ENCODE measurements at regions of chr10 and their contacts with region 1.

Region 1: GRCh38 chr10:79195091-79195923 is 126.5 kb downstream of the ZMIZ1 start:
- DNase-seq: peak; percentile 71
- ATAC-seq: peak; percentile 85
- H3K4me3 ChIP-seq: no peak overlapping the region
- H3K27ac ChIP-seq: peak overlapping the region; percentile 58
- H3K4me1 ChIP-seq: peaks cover 36% of the 10 kb centered on the region
- H3K27me3 ChIP-seq: no peaks in the 10 kb centered on the region
- CTCF ChIP-seq: peak; percentile 98
- EP300 ChIP-seq: no peak
- POLR2A ChIP-seq: no peak
- RAD21 ChIP-seq: peak; percentile 97

Region 2: DNA sequence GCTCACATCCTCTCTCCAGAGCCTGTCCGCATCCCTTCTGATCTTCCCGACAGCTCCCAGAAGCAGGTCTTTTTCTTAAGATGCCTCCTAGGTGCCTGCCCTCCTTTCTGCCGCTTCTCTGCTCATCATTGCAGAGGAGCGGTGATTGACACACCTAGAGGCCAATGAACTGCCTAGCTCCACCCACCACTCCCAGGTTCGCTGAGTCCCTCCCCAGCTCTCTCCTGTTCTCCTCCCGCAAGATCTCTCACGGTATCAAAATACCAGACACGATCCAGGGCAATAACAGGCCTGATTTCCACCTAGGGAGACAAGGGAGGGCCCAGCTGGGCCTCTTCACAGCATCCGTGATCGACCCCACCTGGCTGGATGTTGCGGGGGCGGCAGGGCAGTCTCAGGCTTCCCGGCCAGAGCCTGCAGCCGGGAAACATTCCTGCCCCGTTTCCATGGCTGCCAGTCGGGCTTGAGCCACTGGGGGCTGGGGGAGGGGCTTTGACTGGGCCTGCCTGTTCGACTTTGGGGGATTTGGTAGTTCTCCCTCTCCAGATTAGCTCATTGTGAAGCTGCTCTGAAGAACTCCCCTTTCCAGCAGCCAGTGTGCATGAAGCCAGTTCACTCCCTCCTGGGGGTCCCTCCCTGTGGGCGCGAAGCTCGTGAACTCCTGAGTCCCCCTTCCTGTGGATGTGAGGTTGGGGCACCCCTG is 788.1 kb before region 1 on chr10:
- CTCF ChIA-PET with region 1: no interaction called
- POLR2A ChIA-PET with region 1: no interaction called
- in situ Hi-C with region 1: no loop called
- intact Hi-C with region 1: no loop called
- DNase-seq: peak; percentile 20
- ATAC-seq: peak; percentile 77
- H3K4me3 ChIP-seq: peak overlapping the region in 1 of 3 experiments; percentile 38; a peak in 1 of 6 replicates
- H3K27ac ChIP-seq: no peak overlapping the region
- H3K4me1 ChIP-seq: no peaks in the 10 kb centered on the region; the same call in 1 of the 2 replicates
- H3K27me3 ChIP-seq: peaks cover 4 to 63% of the 10 kb centered on the region in 2 experiments; a peak in 4 of 5 replicates
- CTCF ChIP-seq: no peak
- EP300 ChIP-seq: no peak
- POLR2A ChIP-seq: no peak
- RAD21 ChIP-seq: no peak

Region 3: GRCh38 chr10:78437998-78438906 is 757.1 kb before region 1 on chr10:
- CTCF ChIA-PET with region 1: no interaction called
- POLR2A ChIA-PET with region 1: no interaction called
- in situ Hi-C with region 1: no loop called
- intact Hi-C with region 1: loop called (anchors 10 kb)
- DNase-seq: peak; percentile 70
- ATAC-seq: peak; percentile 84
- H3K4me3 ChIP-seq: no peak overlapping the region
- H3K27ac ChIP-seq: peak overlapping the region; percentile 60
- H3K4me1 ChIP-seq: peaks cover 66% of the 10 kb centered on the region
- H3K27me3 ChIP-seq: no peaks in the 10 kb centered on the region
- CTCF ChIP-seq: peak; percentile 86
- EP300 ChIP-seq: peak; percentile 25 to 68; a peak in 2 of 4 replicates
- POLR2A ChIP-seq: no peak
- RAD21 ChIP-seq: peak; percentile 54

Region 4: GRCh38 chr10:79084012-79084971 is 111.0 kb before region 1 on chr10:
- CTCF ChIA-PET with region 1: no interaction called
- POLR2A ChIA-PET with region 1: interaction called, 3 read pairs
- in situ Hi-C with region 1: loop called (anchors 25 kb)
- intact Hi-C with region 1: no loop called
- DNase-seq: peak; percentile 93
- ATAC-seq: peak; percentile 78
- H3K4me3 ChIP-seq: peak overlapping the region in 1 of 3 experiments; percentile 34; a peak in 1 of 6 replicates
- H3K27ac ChIP-seq: peak overlapping the region; percentile 84
- H3K4me1 ChIP-seq: peaks cover 100% of the 10 kb centered on the region
- H3K27me3 ChIP-seq: no peaks in the 10 kb centered on the region
- CTCF ChIP-seq: no peak
- EP300 ChIP-seq: peak in 1 of 2 experiments; percentile 78; a peak in 2 of 4 replicates
- POLR2A ChIP-seq: no peak
- RAD21 ChIP-seq: no peak

Region 5: DNA sequence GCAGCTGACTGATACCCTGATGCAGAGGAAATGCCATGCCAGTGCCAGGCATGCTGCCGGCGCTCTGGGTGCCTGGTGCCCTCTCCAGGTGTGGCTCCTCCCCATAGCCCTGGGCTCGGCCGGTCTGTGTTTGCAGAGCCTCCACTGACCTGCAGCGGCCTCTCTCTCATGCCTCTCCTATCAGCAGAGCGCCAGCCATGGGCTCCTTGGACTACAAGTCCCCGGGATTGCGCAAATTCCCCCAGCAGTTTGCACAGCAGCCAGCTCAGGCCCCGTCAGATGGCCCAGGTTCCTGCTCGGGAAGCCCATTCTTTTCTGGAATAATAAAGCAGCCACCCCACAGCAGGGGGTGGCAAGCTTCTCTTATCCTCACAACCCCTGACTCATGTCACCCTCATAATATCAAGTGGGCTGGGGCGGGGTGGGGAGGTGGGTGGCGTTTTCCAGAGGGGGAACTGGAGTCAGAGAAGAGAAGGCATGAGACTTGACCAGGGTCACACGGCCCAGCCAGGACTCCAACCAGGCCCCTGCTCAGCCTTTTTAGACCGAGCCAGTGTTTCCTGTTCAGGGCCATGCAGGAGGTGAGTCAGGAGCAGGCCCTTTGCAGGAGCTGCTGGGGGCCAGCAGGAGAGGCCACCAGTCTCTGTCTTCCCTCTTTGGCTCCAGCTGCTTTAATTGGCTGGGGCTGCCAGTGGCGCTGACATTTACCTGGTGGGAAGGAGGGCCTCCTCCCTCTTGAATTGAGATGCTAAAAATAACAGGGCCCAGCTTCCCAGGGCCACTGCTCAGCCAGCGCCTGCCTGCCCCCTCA is 68.0 kb before region 1 on chr10:
- CTCF ChIA-PET with region 1: interaction called, 3 read pairs
- POLR2A ChIA-PET with region 1: no interaction called
- in situ Hi-C with region 1: no loop called
- intact Hi-C with region 1: loop called (anchors 2 kb)
- DNase-seq: peak; percentile 92
- ATAC-seq: peak; percentile 95
- H3K4me3 ChIP-seq: no peak overlapping the region
- H3K27ac ChIP-seq: peak overlapping the region; percentile 51
- H3K4me1 ChIP-seq: peaks cover 73% of the 10 kb centered on the region
- H3K27me3 ChIP-seq: no peaks in the 10 kb centered on the region
- CTCF ChIP-seq: peak; percentile 63
- EP300 ChIP-seq: peak in 1 of 2 experiments; percentile 71; a peak in 2 of 4 replicates
- POLR2A ChIP-seq: no peak
- RAD21 ChIP-seq: peak; percentile 72

Region 6: GRCh38 chr10:79184145-79184625 is 11.1 kb before region 1 on chr10:
- CTCF ChIA-PET with region 1: interaction called, 4 read pairs
- POLR2A ChIA-PET with region 1: interaction called, 10 read pairs
- in situ Hi-C with region 1: no loop called
- intact Hi-C with region 1: no loop called
- DNase-seq: peak; percentile 77
- ATAC-seq: peak; percentile 44
- H3K4me3 ChIP-seq: peak overlapping the region in 1 of 3 experiments; percentile 50; a peak in 2 of 6 replicates
- H3K27ac ChIP-seq: peak overlapping the region; percentile 93
- H3K4me1 ChIP-seq: peaks cover 100% of the 10 kb centered on the region
- H3K27me3 ChIP-seq: no peaks in the 10 kb centered on the region
- CTCF ChIP-seq: no peak
- EP300 ChIP-seq: peak; percentile 28 to 78; a peak in 2 of 4 replicates
- POLR2A ChIP-seq: peak; percentile 34 to 52; a peak in 2 of 4 replicates
- RAD21 ChIP-seq: 0 out of 2 replicates have a peak, but pooled peaks have one; percentile 10